ENCODE measurements at regions of chr16 and their contacts with region 1.

Region 1: DNA sequence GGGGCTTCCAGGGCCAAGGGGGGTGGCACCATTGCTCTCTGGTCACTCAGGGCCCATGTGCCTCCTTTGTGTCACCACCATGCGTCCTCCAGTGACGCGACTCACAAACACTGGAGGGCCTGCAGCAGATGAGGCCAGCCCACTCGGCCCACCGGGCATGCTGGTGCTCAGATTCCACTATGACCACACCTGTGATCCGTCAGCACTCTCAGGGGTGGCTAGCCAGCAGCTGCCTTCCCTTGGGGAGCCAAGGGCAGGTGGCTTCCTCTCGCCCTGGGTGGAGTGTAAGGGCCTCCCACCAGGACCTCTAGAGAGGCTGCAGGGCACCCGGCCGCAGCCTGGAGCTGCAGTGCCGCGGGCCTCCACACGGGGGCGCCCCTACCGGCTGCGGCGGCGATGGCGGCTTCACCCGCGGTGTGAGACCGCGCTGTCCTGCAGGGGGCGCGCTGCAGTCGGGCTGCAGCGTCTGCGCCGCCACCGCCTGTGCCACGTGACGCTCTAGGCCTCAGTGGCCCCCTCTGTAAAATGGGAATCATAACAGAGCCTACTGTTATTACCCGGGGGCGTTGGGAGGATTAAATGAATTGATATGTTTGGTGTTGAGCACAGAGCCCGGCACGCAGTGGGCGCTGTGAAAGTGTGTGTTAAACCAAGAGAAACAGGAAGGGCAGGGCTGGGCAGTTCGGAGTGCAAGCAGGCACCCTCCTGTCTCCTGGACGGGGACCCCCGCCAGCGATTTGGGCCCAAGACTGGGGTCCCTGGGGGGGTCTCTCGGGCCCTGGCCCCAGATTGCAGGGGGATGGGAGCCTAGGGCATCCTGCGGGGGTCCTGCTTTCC is 192.4 kb upstream of the GSE1 start:
- DNase-seq: peak; percentile 71 to 86 (median 84)
- H3K4me3 ChIP-seq: no peak overlapping the region
- H3K27ac ChIP-seq: no peak overlapping the region
- H3K4me1 ChIP-seq: peaks cover 0 to 42% (median 35%) of the 10 kb centered on the region in 4 experiments
- H3K27me3 ChIP-seq: no peaks in the 10 kb centered on the region

Region 2: DNA sequence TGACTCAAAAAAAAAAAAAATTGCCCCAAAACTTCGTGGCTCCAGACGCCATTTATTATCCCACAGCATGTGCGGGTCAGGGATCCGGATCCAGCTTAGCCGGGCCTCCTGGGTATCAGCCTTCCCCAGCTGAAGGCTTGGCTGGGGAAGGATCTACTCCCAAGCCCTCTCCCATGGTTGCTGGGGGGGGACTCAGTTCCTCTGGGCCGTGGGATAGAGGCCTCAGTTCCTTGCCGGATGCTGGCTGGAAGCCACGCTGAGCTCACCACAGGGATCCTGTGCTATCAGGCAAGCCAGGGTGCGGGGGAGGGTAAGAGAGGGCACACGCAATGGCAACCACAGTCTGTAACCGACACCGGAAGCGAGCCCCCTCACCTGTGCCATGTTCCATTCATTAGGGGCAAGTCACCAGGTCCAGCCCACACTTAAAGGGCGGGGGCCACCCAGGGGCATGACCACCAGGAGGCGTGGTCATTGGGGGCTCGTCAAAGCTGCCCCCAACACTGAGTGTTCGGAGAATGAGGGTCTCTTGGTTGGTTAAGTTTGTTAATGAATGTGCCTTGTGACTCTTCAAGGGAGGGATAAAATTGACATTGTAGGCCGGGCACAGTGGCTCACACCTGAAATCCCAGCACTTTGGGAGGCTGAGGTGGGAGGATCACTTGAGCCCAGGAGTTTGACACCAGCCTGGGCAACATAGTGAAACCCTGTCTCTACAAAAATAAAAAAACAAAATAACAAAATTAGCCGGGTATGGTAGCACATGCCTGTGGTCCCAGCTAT is 17.6 kb before region 1 on chr16:
- CTCF ChIA-PET with region 1: interaction called, 14 read pairs
- POLR2A ChIA-PET with region 1: no interaction called
- DNase-seq: peak; percentile 58 to 76 (median 73)
- H3K4me3 ChIP-seq: peak overlapping the region in 2 of 7 experiments; percentile 2 to 5
- H3K27ac ChIP-seq: peak overlapping the region in 1 of 2 experiments; percentile 25
- H3K4me1 ChIP-seq: peaks cover 0 to 19% (median 15%) of the 10 kb centered on the region in 4 experiments
- H3K27me3 ChIP-seq: no peaks in the 10 kb centered on the region

Region 3: GRCh38 chr16:85448557-85449197 is 28.0 kb after region 1 on chr16:
- CTCF ChIA-PET with region 1: interaction called, 17 read pairs
- POLR2A ChIA-PET with region 1: no interaction called
- DNase-seq: peak; percentile 57 to 94 (median 89)
- H3K4me3 ChIP-seq: peak overlapping the region in 3 of 7 experiments; percentile 11 to 39 (median 19)
- H3K27ac ChIP-seq: peak overlapping the region in 1 of 2 experiments; percentile 54
- H3K4me1 ChIP-seq: peaks cover 0 to 75% (median 72%) of the 10 kb centered on the region in 4 experiments
- H3K27me3 ChIP-seq: no peaks in the 10 kb centered on the region

Region 4: DNA sequence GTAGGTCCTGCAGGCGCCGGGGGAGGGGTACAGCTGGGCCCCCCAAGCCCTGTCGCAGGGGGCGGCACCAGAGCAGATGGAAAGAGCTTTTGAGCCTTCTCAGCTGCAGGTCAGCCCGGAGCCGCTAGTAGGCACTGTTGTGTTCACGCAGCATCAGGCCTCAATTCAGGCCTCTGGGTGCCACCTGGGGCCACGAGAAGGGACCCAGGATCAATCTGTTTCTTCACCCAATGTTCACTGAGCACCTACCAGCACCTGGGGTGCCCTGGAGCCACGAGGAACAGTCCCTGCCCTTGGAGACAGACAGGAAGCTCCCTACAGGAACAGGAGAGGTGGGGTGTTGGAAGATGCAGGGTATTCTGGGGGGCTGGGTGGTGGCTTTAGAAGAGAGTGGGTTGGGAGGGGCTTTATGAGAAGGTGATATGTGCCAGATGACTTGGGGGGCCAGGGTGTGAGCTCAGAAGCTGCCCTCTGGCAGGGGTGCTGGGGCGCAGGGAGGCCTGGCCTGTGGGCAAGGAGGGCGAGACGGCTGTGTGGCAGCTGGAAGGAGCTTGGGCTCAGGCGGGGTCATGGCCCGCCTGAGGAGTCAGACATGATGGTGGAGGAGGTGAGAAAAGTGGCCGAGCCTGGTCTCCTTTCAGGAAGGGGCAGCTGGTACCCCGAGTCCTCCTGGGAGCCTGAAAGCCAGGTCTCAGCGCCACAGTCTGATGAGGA is 70.5 kb after region 1 on chr16:
- CTCF ChIA-PET with region 1: interaction called, 12 read pairs
- POLR2A ChIA-PET with region 1: no interaction called
- DNase-seq: peak; percentile 33 to 55 (median 34)
- H3K4me3 ChIP-seq: no peak overlapping the region
- H3K27ac ChIP-seq: no peak overlapping the region
- H3K4me1 ChIP-seq: peaks cover 0 to 37% (median 16%) of the 10 kb centered on the region in 4 experiments
- H3K27me3 ChIP-seq: no peaks in the 10 kb centered on the region

Region 5: GRCh38 chr16:85610508-85611332 is 190.0 kb after region 1 on chr16:
- CTCF ChIA-PET with region 1: interaction called, 29 read pairs
- POLR2A ChIA-PET with region 1: interaction called, 3 read pairs
- DNase-seq: peak; percentile 84 to 88 (median 86)
- H3K4me3 ChIP-seq: peak overlapping the region in 5 of 7 experiments; percentile 36 to 85 (median 65)
- H3K27ac ChIP-seq: peak overlapping the region; percentile 23 to 71
- H3K4me1 ChIP-seq: peaks cover 3 to 73% (median 60%) of the 10 kb centered on the region in 4 experiments
- H3K27me3 ChIP-seq: no peaks in the 10 kb centered on the region

Measured in common myeloid progenitor, CD34-positive (primary cell).